Activated CD4-positive, alpha-beta memory T cell treated with anti-CD3 and anti-CD28 coated beads for 36 hours (primary cell): ENCODE measurements at regions of chr14 and their contacts with region 1.

Region 1: DNA sequence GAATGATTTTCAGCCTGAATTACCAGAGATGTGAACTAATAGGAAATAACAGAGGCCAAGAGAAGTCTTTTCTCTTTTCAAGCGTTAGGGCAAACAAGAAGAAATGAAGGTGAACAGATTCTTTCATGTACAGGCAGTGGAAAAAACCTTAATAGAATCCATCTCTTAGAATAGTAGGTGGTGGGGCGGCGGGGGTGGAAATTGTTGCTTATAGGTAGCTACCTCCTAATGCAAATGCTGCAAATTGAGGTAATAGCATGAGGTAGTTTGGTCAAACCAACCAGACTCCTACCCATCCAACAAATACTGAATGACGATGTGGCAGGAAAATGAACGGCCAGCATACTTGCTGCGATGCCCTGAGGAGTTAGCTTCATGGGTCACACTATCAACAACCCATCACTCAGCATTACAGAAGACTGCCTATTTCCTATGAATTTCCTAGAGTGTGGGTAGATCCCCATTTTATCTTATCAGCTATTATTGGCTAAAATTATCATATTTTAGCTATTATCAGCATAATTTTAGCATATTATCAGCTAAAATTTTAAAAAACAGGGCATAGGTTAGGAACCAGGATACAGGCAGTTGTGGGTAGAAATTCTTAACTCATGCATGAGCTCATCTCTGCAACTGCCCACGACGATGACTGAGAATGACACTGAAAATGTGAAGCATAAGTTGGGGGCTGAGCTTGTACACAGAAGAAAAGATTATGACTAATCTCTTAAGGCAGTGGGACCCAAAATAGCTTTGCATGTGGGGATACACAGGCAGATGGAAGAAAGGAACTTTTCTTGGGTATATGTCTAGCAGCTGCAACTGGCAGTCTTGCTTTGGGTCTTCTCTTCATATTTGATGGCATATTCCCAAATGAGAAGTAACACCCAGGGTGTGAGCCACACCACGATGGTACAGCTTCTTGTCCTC is 68.7 kb downstream of the NIN start:
- DNase-seq: peak; percentile 77
- H3K4me3 Mint-ChIP-seq: no peak overlapping the region
- H3K27ac Mint-ChIP-seq: peak overlapping the region; percentile 24
- H3K4me1 Mint-ChIP-seq: peaks cover 25% of the 10 kb centered on the region
- H3K27me3 Mint-ChIP-seq: no peaks in the 10 kb centered on the region

Region 2: DNA sequence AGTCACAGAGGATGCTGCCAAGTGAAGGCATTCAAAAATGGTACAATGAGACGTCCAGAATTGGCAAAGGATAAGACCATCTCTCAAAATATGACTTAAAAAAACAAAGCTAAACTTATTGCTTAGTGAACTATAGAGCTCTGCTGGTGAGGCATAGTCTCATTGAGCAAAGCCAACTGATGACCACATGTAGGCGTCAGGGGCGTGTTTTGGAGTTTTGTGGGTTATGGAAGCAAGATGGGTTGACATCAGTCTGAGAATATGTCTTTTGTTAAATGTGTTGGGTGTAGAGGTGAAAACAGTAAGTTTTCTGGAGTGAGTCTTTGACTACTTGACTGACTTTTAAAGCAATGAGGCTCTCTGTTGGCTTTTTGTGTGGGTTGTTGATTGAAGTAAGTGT is 155.1 kb before region 1 on chr14:
- CTCF ChIA-PET with region 1: interaction called, 3 read pairs
- POLR2A ChIA-PET with region 1: no interaction called
- intact Hi-C with region 1: loop called (anchors 5 kb)
- DNase-seq: peak; percentile 80
- H3K4me3 Mint-ChIP-seq: no peak overlapping the region
- H3K27ac Mint-ChIP-seq: no peak overlapping the region
- H3K4me1 Mint-ChIP-seq: peaks cover 7% of the 10 kb centered on the region
- H3K27me3 Mint-ChIP-seq: peaks cover 4% of the 10 kb centered on the region

Region 3: GRCh38 chr14:50667996-50668825 is 94.1 kb before region 1 on chr14 and contains the start of gene SAV1:
- CTCF ChIA-PET with region 1: no interaction called
- POLR2A ChIA-PET with region 1: interaction called, 4 read pairs
- intact Hi-C with region 1: loop called (anchors 5 kb)
- DNase-seq: peak; percentile 67
- H3K4me3 Mint-ChIP-seq: no peak within 1 kb of the TSS
- H3K27ac Mint-ChIP-seq: peak within 1 kb of the TSS; percentile 63
- H3K4me1 Mint-ChIP-seq: peaks cover 18% of the 10 kb centered on the region
- H3K27me3 Mint-ChIP-seq: no peaks in the 10 kb centered on the region
- total RNA-seq, gene SAV1: 13.4 to 13.5 TPM

Region 4: DNA sequence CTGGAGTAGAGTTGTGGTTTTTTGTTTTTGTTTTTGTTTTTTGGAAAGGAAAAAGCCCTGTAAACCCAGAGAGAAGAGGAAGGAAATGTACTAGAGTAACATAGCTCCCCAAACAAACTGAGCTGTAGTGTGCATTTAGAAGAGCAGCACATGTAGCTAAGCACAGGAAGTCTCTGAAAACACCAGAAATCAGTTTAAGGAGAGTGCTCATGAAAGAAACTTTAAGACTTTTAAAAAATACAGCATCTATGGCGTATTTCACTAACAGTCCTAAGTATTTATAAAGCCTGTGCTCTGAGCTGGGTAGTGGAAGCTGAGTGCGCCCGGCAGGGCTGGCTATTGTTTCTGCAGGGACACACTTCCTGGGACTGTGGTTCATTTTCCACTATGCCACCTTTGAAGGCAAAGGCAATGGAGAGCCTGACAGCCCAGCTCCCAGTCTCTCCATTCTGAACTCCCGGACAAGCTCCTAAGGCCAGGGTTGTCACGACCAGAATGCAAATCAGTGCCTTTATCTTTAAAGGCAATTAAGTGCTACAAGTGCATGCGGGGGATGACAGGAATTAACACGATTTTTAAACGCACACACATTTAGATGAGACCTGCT is 23.3 kb after region 1 on chr14:
- CTCF ChIA-PET with region 1: interaction called, 3 read pairs
- POLR2A ChIA-PET with region 1: interaction called, 6 read pairs
- intact Hi-C with region 1: loop called (anchors 1 kb)
- DNase-seq: no peak
- H3K4me3 Mint-ChIP-seq: no peak overlapping the region
- H3K27ac Mint-ChIP-seq: no peak overlapping the region
- H3K4me1 Mint-ChIP-seq: peaks cover 55% of the 10 kb centered on the region
- H3K27me3 Mint-ChIP-seq: no peaks in the 10 kb centered on the region

Region 5: GRCh38 chr14:50813544-50813863 is 51.2 kb after region 1 on chr14:
- CTCF ChIA-PET with region 1: no interaction called
- POLR2A ChIA-PET with region 1: no interaction called
- intact Hi-C with region 1: loop called (anchors 2 kb)
- DNase-seq: no peak
- H3K4me3 Mint-ChIP-seq: peak overlapping the region; percentile 73
- H3K27ac Mint-ChIP-seq: peak overlapping the region; percentile 93
- H3K4me1 Mint-ChIP-seq: peaks cover 43% of the 10 kb centered on the region
- H3K27me3 Mint-ChIP-seq: no peaks in the 10 kb centered on the region